CD8-positive, alpha-beta T cell (primary cell): ENCODE measurements at regions of chrX and their contacts with region 1.

Region 1: DNA sequence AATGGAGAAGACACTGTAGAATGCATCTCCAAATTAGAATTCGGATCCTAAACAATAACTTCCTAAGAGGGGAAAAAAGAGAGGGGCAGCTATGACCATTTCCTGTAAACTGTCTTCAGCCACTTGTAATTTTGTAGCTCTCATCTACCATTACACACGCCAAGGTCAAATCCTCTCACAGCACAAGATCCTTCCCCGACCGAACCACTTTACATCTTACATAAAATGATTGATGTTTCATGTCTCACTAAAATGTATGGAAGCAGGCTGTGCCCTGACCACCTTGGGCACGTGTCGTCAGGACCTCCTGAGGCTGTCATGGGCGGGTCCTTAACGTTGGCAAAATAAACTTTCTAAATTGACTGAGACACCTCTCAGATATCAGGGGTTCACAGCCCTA is 24.1 kb upstream of the PBDC1 start:
- DNase-seq: peak in 8 of 9 experiments; percentile 6 to 76 (median 58)
- ATAC-seq: peak; percentile 35
- H3K4me3 ChIP-seq: peak overlapping the region; percentile 2 to 13
- H3K4me3 Mint-ChIP-seq: peak overlapping the region; percentile 70
- H3K27ac ChIP-seq: peak overlapping the region; percentile 65 to 88
- H3K27ac Mint-ChIP-seq: peak overlapping the region; percentile 95
- H3K4me1 ChIP-seq: peaks cover 24% of the 10 kb centered on the region
- H3K4me1 Mint-ChIP-seq: peaks cover 21% of the 10 kb centered on the region
- H3K27me3 ChIP-seq: no peaks in the 10 kb centered on the region
- H3K27me3 Mint-ChIP-seq: no peaks in the 10 kb centered on the region
- CTCF ChIP-seq: no peak

Region 2: GRCh38 chrX:75273483-75273882 is 875.3 kb before region 1 on chrX:
- CTCF ChIA-PET with region 1: no interaction called
- POLR2A ChIA-PET with region 1: no interaction called
- intact Hi-C with region 1: loop called in 1 of 2 experiments (anchors 10 kb)
- DNase-seq: peak in 1 of 9 experiments; percentile 5
- ATAC-seq: peak; percentile 43
- H3K4me3 ChIP-seq: peak overlapping the region; percentile 75 to 88
- H3K4me3 Mint-ChIP-seq: peak overlapping the region; percentile 92
- H3K27ac ChIP-seq: peak overlapping the region; percentile 89 to 90
- H3K27ac Mint-ChIP-seq: peak overlapping the region; percentile 96
- H3K4me1 ChIP-seq: peaks cover 18% of the 10 kb centered on the region
- H3K4me1 Mint-ChIP-seq: peaks cover 44% of the 10 kb centered on the region
- H3K27me3 ChIP-seq: no peaks in the 10 kb centered on the region
- H3K27me3 Mint-ChIP-seq: no peaks in the 10 kb centered on the region
- CTCF ChIP-seq: no peak

Region 3: GRCh38 chrX:76253432-76253831 is 104.7 kb after region 1 on chrX:
- CTCF ChIA-PET with region 1: interaction called, 4 read pairs
- POLR2A ChIA-PET with region 1: interaction called, 3 read pairs
- intact Hi-C with region 1: loop called (anchors 5 kb)
- DNase-seq: peak in 8 of 9 experiments; percentile 3 to 66 (median 34)
- ATAC-seq: peak; percentile 72
- H3K4me3 ChIP-seq: no peak overlapping the region
- H3K4me3 Mint-ChIP-seq: no peak overlapping the region
- H3K27ac ChIP-seq: no peak overlapping the region
- H3K27ac Mint-ChIP-seq: no peak overlapping the region
- H3K4me1 ChIP-seq: no peaks in the 10 kb centered on the region
- H3K4me1 Mint-ChIP-seq: peaks cover 4% of the 10 kb centered on the region
- H3K27me3 ChIP-seq: no peaks in the 10 kb centered on the region
- H3K27me3 Mint-ChIP-seq: no peaks in the 10 kb centered on the region
- CTCF ChIP-seq: peak; percentile 41